CD4-positive, alpha-beta memory T cell (primary cell): ENCODE measurements at regions of chr2 and their contacts with region 1.

Region 1: DNA sequence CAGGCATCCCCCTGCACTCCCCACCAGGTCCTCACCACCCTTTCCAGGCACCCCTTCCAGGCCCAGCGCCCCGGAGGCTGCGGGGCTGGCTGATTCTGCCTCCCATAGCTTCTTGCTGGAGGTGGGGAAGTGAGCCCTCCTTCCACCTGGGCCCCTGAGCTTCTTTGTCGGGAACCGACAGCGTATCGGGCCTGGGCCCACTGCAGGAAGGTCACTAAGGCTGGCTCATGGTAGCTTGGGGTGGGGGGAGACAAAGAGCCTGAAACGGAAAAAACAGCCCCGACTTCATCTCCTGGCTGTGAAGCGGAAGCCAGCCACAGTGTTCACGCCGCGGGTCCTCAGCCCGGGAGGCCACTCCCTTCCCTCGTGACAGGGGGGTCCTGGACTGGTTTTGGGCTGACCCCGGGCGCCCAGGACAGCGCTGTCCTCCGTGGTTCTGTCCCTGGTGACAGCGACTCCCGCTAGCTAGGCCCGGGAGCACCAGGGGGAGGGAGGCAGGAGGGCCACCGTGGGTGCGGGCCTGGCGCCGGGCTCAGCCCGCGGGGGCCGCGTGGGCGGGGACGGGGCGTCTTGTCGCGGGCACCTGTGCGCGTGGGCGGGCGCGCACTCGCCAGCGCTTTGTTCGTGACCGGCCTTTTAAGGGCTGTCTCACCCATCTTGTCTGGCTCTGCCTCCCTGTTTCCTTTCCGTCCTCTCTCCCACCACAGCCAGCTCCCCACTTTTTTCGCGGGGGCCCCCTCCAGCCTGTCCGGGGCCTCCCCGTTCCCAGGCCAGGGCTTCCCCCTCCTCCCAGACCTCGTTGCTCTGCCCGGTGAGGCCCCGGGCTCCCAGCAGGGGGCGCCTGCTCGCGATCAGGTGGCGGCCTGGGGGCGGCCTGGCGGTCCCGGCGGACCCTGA is 64.9 kb downstream of the DNMT3A start:
- DNase-seq: peak; percentile 69 to 79 (median 73)
- H3K4me3 ChIP-seq: peak overlapping the region; percentile 26 to 53
- H3K4me3 Mint-ChIP-seq: peak overlapping the region; percentile 67 to 81 (median 76)
- H3K27ac ChIP-seq: peak overlapping the region; percentile 89
- H3K27ac Mint-ChIP-seq: peak overlapping the region; percentile 93 to 99 (median 96)
- H3K4me1 ChIP-seq: peaks cover 73% of the 10 kb centered on the region
- H3K4me1 Mint-ChIP-seq: peaks cover 37 to 78% (median 61%) of the 10 kb centered on the region in 4 donors
- H3K27me3 ChIP-seq: no peaks in the 10 kb centered on the region
- H3K27me3 Mint-ChIP-seq: no peaks in the 10 kb centered on the region

Region 2: DNA sequence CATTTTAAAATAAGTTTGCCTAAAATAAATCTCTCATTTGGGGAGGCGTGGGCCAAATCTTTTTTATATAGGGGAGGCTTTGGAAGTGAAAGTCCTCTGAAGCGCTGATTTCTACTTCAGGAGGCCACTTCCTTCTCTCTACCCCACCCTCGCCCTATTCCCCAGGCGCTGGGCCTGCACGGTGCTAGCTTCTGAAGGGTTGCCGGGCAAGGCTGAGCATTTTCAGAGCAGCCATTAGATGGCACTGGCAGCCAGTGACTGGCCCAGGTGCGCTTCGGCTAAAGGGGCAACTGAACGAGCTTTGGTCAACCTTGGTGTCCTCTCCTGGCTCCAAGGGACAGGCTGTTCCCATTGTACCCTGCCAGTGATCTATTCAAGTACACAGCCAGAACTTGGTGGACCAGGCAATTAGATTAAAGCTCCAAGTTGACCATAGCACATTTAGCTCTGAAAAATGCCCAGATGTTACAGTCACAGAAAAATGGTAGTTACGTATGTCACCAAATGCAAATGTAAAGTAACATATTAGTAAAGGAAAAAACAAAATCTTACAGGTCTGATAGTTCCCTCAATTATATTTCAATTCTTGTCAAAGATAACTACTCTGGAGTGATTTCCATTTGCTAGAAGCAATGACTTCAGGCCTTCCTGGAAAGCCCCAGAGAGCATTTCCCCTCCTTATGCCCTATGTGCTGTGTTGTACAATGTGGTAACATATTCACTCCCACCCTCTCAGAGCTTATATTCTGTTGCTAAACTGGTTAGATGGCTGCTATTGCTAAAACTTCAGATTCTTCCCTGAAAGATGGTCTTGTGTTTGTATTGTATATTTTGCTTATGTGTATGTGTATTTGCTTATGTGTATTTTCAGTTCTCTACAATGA is 110.6 kb before region 1 on chr2:
- CTCF ChIA-PET with region 1: no interaction called
- POLR2A ChIA-PET with region 1: no interaction called
- intact Hi-C with region 1: loop called (anchors 10 kb)
- DNase-seq: peak; percentile 20 to 35 (median 29)
- H3K4me3 ChIP-seq: no peak overlapping the region
- H3K4me3 Mint-ChIP-seq: peak overlapping the region in 4 of 8 donors; percentile 9 to 87 (median 57)
- H3K27ac ChIP-seq: no peak overlapping the region
- H3K27ac Mint-ChIP-seq: no peak overlapping the region
- H3K4me1 ChIP-seq: peaks cover 13% of the 10 kb centered on the region
- H3K4me1 Mint-ChIP-seq: peaks cover 9 to 33% (median 17%) of the 10 kb centered on the region in 4 donors
- H3K27me3 ChIP-seq: peaks cover 20% of the 10 kb centered on the region
- H3K27me3 Mint-ChIP-seq: peaks cover 21 to 22% of the 10 kb centered on the region in 2 donors

Region 3: DNA sequence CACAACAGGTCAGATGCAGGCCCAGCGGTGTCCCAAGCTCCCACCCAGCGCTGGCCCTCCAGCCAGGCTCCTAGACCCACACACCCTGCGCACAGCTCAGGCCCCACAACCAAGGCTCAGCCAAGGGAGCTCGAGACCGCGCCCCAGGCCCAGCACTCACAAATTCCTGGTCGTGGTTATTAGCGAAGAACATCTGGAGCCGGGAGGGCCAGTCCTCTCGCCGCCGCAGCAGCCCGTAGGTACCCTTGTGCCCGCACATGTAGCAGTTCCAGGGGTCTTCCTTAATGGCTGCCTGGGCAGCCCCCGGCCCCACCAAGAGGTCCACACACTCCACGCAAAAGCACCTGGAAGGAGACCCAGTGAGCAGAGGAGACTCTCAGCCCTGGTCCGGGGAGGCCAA is 32.8 kb before region 1 on chr2:
- CTCF ChIA-PET with region 1: interaction called, 4 read pairs
- POLR2A ChIA-PET with region 1: interaction called, 10 read pairs
- intact Hi-C with region 1: no loop called
- DNase-seq: no peak
- H3K4me3 ChIP-seq: no peak overlapping the region
- H3K4me3 Mint-ChIP-seq: no peak overlapping the region
- H3K27ac ChIP-seq: no peak overlapping the region
- H3K27ac Mint-ChIP-seq: no peak overlapping the region
- H3K4me1 ChIP-seq: no peaks in the 10 kb centered on the region
- H3K4me1 Mint-ChIP-seq: peaks cover 0 to 3% (median under 1%) of the 10 kb centered on the region in 4 donors
- H3K27me3 ChIP-seq: no peaks in the 10 kb centered on the region
- H3K27me3 Mint-ChIP-seq: no peaks in the 10 kb centered on the region

Region 4: DNA sequence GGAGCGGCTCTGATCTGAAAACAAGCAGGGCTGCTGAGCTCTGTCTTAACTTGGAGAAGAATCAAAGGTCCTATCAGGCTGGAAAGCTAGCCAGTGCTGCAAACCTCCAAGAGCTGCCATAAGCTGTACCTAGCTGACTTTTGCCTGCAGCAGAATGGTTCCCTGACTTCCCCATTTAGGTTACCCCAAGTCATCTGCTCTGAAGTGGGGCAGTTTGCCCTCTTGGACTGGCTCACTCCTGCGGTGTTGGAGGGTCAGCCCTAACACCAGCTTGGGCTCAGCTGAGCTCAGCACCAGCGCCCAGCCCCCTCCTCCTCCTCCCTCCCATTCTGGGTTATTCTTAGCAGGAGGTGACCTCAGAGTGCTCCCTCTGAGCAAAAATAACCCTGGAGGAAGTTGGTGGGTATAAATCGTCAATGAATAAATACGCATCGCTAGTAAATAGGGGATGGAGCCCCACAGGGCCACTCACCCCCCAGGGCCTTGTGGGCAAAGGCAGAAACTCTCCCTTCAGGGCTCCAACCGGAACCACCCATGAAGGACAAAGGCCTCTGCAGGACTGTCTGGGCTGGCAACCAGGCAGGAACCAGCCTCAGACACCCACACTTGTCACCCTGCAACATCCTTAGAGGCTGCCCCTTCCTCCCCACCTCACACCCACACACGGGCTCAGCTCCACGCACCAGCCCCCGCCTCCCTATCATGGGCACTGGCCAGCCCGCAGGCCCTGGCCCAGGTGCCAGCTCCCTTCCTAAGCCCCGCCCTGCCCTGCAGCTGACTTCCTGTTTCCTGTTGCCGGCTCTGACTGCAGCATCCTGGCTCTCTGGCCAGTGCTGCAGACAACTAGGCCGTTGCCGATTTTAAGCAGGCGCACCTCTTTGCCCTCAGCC is 18.0 kb after region 1 on chr2:
- CTCF ChIA-PET with region 1: interaction called, 40 read pairs
- POLR2A ChIA-PET with region 1: interaction called, 75 read pairs
- intact Hi-C with region 1: loop called (anchors 1 kb)
- DNase-seq: peak; percentile 73 to 90 (median 76)
- H3K4me3 ChIP-seq: peak overlapping the region; percentile 32 to 39
- H3K4me3 Mint-ChIP-seq: peak overlapping the region; percentile 72 to 90 (median 82)
- H3K27ac ChIP-seq: peak overlapping the region; percentile 69
- H3K27ac Mint-ChIP-seq: peak overlapping the region; percentile 86 to 97 (median 93)
- H3K4me1 ChIP-seq: peaks cover 52% of the 10 kb centered on the region
- H3K4me1 Mint-ChIP-seq: peaks cover 28 to 43% (median 37%) of the 10 kb centered on the region in 4 donors
- H3K27me3 ChIP-seq: no peaks in the 10 kb centered on the region
- H3K27me3 Mint-ChIP-seq: no peaks in the 10 kb centered on the region

Region 5: DNA sequence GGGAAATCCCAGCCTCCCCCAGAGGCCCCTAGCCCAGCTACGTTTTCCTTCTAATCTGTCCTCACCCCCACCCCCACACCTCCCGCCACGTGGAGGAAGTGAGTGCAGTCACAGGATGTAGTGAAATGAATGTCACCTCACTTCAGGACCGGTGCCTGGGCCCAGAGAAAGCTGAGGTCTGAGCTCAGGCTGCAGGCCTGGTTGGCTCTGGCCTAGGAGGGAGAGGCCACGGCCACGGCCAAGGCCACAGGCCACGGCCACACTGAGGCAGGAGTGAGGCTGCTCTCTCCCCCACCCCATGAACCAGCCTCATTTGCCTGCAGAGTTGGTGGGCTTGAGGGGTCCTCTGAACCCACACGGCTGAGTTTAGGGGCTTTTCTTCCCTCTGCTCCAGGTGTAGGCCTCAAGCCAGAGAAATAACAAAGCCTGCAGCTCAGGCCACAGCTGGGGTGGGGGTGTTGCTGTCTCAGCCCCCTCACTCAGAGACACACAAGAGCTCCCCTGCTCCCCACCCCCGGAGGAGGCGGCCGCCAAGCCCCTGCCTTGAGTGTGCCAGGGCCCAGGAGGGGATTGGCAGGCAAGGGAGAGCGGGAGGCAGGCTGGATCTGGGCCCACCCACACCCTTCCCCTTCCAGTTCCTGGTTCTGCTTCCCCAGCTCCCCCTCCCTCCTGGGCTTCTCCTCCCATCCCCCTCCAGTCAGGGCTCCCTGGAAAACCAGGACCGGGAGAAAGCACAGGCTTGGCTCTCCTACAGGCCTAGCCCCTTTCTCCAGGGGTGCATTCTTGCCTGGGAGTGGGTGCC is 37.9 kb after region 1 on chr2:
- CTCF ChIA-PET with region 1: interaction called, 26 read pairs
- POLR2A ChIA-PET with region 1: interaction called, 49 read pairs
- intact Hi-C with region 1: loop called (anchors 1 kb)
- DNase-seq: peak; percentile 53 to 80 (median 60)
- H3K4me3 ChIP-seq: peak overlapping the region; percentile 14 to 57
- H3K4me3 Mint-ChIP-seq: peak overlapping the region; percentile 82 to 90 (median 87)
- H3K27ac ChIP-seq: peak overlapping the region; percentile 61
- H3K27ac Mint-ChIP-seq: peak overlapping the region; percentile 91 to 94 (median 92)
- H3K4me1 ChIP-seq: peaks cover 67% of the 10 kb centered on the region
- H3K4me1 Mint-ChIP-seq: peaks cover 27 to 76% (median 46%) of the 10 kb centered on the region in 4 donors
- H3K27me3 ChIP-seq: no peaks in the 10 kb centered on the region
- H3K27me3 Mint-ChIP-seq: no peaks in the 10 kb centered on the region

Region 6: DNA sequence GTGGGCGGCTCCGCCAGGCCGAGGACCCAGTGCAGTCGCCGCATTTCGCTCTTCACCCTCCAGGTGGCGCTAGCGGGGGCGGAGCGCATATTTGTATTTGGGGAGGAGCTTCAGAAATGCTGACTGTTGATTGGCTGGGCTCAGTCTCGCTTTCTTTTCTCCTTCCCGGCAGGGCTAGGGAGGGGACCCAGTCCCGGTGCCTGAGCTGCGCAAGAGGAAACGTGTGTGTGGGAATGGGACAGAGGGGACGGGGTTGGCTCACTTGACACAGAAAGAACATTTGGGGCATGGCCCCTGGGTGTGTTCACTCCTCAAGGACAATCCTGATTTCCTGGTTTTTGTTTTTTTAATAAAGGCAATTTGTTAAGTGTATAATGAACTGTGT is 85.2 kb after region 1 on chr2:
- CTCF ChIA-PET with region 1: interaction called, 29 read pairs
- POLR2A ChIA-PET with region 1: interaction called, 28 read pairs
- intact Hi-C with region 1: no loop called
- DNase-seq: peak; percentile 90 to 95 (median 93)
- H3K4me3 ChIP-seq: peak overlapping the region; percentile 67 to 70
- H3K4me3 Mint-ChIP-seq: peak overlapping the region; percentile 88 to 94 (median 91)
- H3K27ac ChIP-seq: peak overlapping the region; percentile 69
- H3K27ac Mint-ChIP-seq: peak overlapping the region; percentile 78 to 97 (median 91)
- H3K4me1 ChIP-seq: peaks cover 11% of the 10 kb centered on the region
- H3K4me1 Mint-ChIP-seq: peaks cover 9 to 37% (median 14%) of the 10 kb centered on the region in 4 donors
- H3K27me3 ChIP-seq: no peaks in the 10 kb centered on the region
- H3K27me3 Mint-ChIP-seq: no peaks in the 10 kb centered on the region

Region 7: DNA sequence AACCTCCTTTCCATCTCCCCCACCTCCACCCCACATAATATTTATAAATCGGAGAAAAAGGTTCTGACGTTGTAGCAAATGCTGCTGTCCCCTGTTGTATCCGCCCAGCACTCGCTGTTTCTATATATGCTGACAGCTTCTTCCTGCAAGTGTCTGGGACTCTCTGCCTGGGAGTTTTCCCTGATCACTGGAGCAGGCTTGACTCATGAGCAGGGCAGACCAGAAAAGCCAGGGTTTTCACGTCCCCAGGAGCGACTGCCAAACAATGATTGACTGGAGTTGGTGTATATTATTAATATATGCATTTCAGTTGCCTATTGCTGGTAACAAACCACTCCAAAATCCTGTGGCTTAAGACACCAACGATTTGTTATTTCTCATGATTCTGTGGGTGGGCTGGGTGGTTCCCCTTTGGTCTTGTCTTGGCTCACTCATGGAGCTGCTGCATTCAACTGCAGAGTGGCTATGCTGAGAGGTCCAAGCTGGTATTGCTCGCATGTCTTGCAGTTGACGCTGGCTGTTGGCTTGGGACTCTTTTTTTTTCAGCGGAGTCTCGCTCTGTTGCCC is 622.7 kb after region 1 on chr2:
- CTCF ChIA-PET with region 1: no interaction called
- POLR2A ChIA-PET with region 1: no interaction called
- intact Hi-C with region 1: no loop called
- DNase-seq: no peak
- H3K4me3 ChIP-seq: no peak overlapping the region
- H3K4me3 Mint-ChIP-seq: no peak overlapping the region
- H3K27ac ChIP-seq: no peak overlapping the region
- H3K27ac Mint-ChIP-seq: peak overlapping the region in 1 of 7 donors; percentile 58
- H3K4me1 ChIP-seq: no peaks in the 10 kb centered on the region
- H3K4me1 Mint-ChIP-seq: no peaks in the 10 kb centered on the region
- H3K27me3 ChIP-seq: no peaks in the 10 kb centered on the region
- H3K27me3 Mint-ChIP-seq: no peaks in the 10 kb centered on the region